Prostate gland (tissue), 2 donors: ENCODE measurements at regions of chr2 and their contacts with region 1.

Region 1: DNA sequence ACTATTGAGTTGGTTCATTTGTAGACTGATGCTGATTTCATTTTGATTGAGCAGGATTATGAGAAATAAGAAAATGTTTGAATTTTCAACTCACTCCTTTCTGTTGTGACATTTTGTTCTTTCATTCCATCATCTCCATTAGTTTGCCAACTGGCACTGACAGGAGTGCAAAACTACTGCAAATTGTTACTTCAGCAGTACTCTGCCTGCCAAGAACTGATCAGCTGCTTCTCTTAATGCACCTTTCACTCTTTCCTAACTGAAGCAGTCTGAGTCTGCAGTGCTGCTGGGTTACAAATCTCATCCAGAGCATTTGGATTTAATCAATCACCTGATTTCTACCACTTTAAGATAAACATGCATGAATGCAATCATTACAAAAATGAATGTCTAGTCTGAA is 70.9 kb downstream of the TMEFF2 start:
- DNase-seq: peak; percentile 15
- H3K4me3 ChIP-seq: no peak overlapping the region
- H3K27ac ChIP-seq: no peak overlapping the region
- H3K4me1 ChIP-seq: no peaks in the 10 kb centered on the region
- H3K27me3 ChIP-seq: no peaks in the 10 kb centered on the region
- CTCF ChIP-seq: no peak
- POLR2A ChIP-seq: no peak

Region 2: GRCh38 chr2:191846515-191847476 is 277.1 kb before region 1 on chr2 and contains the start of gene CAVIN2:
- intact Hi-C with region 1: loop called (anchors 10 kb)
- DNase-seq: peak; percentile 48
- H3K4me3 ChIP-seq: peak within 1 kb of the TSS; percentile 24 to 26
- H3K27ac ChIP-seq: peak within 1 kb of the TSS; percentile 57 to 70
- H3K4me1 ChIP-seq: no peaks in the 10 kb centered on the region
- H3K27me3 ChIP-seq: no peaks in the 10 kb centered on the region
- CTCF ChIP-seq: no peak
- POLR2A ChIP-seq: no peak
- total RNA-seq, gene CAVIN2: 24.8 to 27.1 TPM

Region 3: GRCh38 chr2:192035731-192036442 is 88.0 kb before region 1 on chr2:
- intact Hi-C with region 1: loop called (anchors 10 kb)
- DNase-seq: no peak
- H3K4me3 ChIP-seq: no peak overlapping the region
- H3K27ac ChIP-seq: peak overlapping the region in 1 of 2 donors; percentile 27
- H3K4me1 ChIP-seq: no peaks in the 10 kb centered on the region
- H3K27me3 ChIP-seq: no peaks in the 10 kb centered on the region
- CTCF ChIP-seq: no peak
- POLR2A ChIP-seq: no peak